Psoas muscle (tissue), 8 donors: ENCODE measurements at regions of chr10 and their contacts with region 1.

Region 1: DNA sequence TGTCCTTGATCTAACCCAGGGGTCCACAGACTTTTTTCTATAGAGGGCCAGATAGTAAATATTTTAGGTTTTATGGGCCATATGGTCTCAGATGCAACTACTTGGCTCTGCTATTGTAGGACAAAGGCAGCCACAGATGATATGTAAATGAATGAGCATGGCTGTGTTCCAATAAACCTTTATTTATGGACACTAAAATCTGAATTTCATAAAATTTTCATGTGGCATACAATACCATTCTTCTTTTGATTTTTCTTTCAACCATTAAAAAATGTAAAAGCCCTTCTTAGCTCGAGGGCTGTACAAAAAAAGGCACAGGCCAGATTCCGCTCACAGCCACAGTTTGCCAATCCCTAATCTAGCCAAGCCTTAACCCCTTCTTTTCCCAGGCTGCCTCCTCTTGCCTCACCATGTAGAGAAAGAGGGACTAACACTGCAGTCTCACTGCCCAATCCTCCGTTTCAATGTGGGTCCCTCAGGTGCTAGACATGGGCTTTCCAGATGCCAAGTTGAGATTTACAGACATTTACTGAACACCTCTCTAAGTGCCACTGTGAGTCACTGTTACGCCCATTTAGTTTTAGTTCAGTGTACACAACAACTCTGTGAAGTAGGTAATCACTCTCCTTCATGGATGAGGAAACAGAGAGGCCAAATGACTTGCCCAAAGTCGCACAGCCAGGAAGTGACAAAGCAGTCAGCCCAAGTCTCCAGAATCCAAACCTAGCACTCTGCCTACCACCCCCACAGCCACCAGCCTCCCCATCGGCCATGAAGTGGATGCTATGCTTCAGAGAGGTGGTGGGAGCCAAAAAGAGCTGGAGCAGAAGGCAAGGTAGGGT is 132.6 kb upstream of the PDLIM1 start:
- DNase-seq: no peak
- ATAC-seq: peak in 2 of 4 donors; percentile 22 to 34
- H3K4me3 ChIP-seq: no peak overlapping the region
- H3K27ac ChIP-seq: no peak overlapping the region
- H3K4me1 ChIP-seq: peaks cover 4% of the 10 kb centered on the region
- H3K27me3 ChIP-seq: no peaks in the 10 kb centered on the region
- CTCF ChIP-seq: no peak

Region 2: GRCh38 chr10:95388539-95388938 is 34.8 kb before region 1 on chr10:
- intact Hi-C with region 1: loop called in 1 of 2 experiments (anchors 5 kb)
- DNase-seq: no peak
- ATAC-seq: peak; percentile 36 to 74 (median 46)
- H3K4me3 ChIP-seq: no peak overlapping the region
- H3K27ac ChIP-seq: peak overlapping the region; percentile 13
- H3K4me1 ChIP-seq: peaks cover 12% of the 10 kb centered on the region
- H3K27me3 ChIP-seq: no peaks in the 10 kb centered on the region
- CTCF ChIP-seq: no peak